H1 (cell line): ENCODE measurements at regions of chr1 and their contacts with region 1.

Region 1: GRCh38 chr1:112809253-112809684 is 94.1 kb upstream of the PPM1J start:
- DNase-seq: peak in 1 of 2 experiments; percentile 96
- H3K4me3 ChIP-seq: no peak overlapping the region
- H3K27ac ChIP-seq: peak overlapping the region; percentile 4; the same call in 1 of the 2 replicates
- H3K4me1 ChIP-seq: peaks cover 5 to 13% (median 8%) of the 10 kb centered on the region in 4 experiments; a peak in 6 of 7 replicates
- H3K27me3 ChIP-seq: no peaks in the 10 kb centered on the region
- CTCF ChIP-seq: peak; percentile 87 to 96 (median 96)
- EP300 ChIP-seq: no peak
- POLR2A ChIP-seq: no peak
- RAD21 ChIP-seq: peak; percentile 93 to 96

Region 2: DNA sequence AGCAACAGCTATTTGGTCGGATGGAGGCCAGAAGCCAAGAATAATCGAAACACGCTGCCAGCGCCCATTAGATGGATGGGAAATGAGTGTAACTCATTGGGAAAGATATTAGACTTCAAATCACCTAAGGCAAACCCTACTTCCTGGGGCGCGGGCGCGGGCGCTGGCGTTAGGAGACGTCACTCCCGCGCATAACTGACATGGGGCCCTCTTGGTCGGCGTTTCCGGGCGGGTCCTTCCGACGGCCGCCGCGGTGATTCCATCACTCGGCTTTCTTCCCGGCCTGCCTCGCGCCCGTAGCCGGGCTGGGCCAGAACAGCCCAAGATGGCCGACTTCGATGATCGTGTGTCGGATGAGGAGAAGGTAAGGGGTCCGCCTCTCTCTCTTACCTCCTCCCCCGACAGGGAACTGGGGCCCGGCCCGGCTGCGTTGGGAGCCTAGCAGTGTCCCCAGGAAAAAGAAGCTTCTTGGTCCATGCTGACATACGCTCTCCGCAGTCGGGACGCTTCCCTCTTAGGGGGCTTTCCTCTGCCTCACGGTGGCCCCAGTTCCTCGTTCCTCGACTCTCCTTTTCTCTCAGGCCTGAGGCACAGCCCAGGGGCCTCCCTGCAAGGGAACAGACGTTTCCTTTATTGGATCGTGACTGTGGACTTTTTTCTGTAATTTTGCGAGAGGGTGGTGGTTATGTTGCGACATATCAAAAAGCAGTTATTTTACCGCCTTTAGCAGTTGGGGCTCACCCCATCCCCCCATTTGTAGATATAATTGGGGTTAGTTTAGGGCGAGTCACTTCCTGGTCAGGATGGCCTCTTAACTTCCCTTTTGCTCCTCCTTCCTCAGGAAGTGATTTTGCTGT is 189.5 kb before region 1 on chr1 and contains the start of gene CAPZA1:
- CTCF ChIA-PET with region 1: no interaction called
- POLR2A ChIA-PET with region 1: no interaction called
- DNase-seq: peak; percentile 61 to 87
- H3K4me3 ChIP-seq: peak within 1 kb of the TSS; percentile 84 to 98 (median 96)
- H3K27ac ChIP-seq: peak within 1 kb of the TSS; percentile 96
- H3K4me1 ChIP-seq: peaks cover 0 to 5% (median 0%) of the 10 kb centered on the region in 4 experiments; a peak in 2 of 7 replicates
- H3K27me3 ChIP-seq: no peaks in the 10 kb centered on the region
- CTCF ChIP-seq: no peak
- EP300 ChIP-seq: peak in 1 of 2 experiments; percentile 71; a peak in 1 of 3 replicates
- POLR2A ChIP-seq: peak; percentile 87 to 96
- RAD21 ChIP-seq: no peak; a peak in 1 of 4 replicates
- total RNA-seq, gene CAPZA1: 107 and 114 TPM in 2 replicates

Region 3: GRCh38 chr1:112794654-112795239 is 14.5 kb before region 1 on chr1:
- CTCF ChIA-PET with region 1: interaction called, 21 read pairs
- POLR2A ChIA-PET with region 1: interaction called, 3 read pairs
- DNase-seq: no peak
- H3K4me3 ChIP-seq: no peak overlapping the region
- H3K27ac ChIP-seq: 0 out of 2 replicates have a peak overlapping the region, but pooled peaks have one; percentile 52
- H3K4me1 ChIP-seq: peaks cover 2 to 25% (median 14%) of the 10 kb centered on the region in 4 experiments
- H3K27me3 ChIP-seq: no peaks in the 10 kb centered on the region; a peak in 1 of 7 replicates
- CTCF ChIP-seq: no peak
- EP300 ChIP-seq: no peak
- POLR2A ChIP-seq: no peak
- RAD21 ChIP-seq: no peak

Region 4: DNA sequence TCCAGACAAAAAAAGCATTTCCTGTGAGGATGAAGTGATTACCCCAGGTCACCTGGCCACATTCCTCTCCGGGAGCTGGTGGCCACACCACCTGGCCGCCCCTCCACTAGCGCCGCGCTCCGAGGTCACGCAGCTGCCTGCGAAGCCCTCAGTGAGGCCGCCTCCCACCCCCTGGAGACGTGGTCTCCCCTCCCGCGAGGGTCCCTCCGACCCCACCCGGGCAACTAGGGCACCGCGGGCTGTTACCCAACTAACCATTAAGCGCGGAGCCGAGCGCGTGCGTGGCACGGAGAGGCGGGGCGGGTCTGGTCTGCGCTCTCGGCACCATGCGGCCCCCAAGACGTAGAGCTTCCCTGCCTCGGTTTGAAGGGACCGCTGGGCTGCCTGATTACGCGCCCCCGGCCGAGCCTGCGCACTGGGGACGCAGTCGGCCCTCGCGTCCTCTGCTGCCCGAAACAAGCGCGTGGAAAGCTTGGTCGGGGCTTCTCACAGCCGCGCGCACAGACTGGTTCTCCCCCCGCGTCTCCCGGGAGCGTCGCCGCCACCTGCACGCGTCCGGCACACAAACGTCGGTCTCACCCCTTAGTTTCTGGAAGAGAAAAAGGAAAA is 40.3 kb after region 1 on chr1:
- CTCF ChIA-PET with region 1: interaction called, 10 read pairs
- POLR2A ChIA-PET with region 1: interaction called, 5 read pairs
- DNase-seq: peak in 1 of 2 experiments; percentile 81
- H3K4me3 ChIP-seq: peak overlapping the region; percentile 14 to 51 (median 20); a peak in 7 of 8 replicates
- H3K27ac ChIP-seq: no peak overlapping the region
- H3K4me1 ChIP-seq: peaks cover 0 to 20% (median 6%) of the 10 kb centered on the region in 4 experiments; a peak in 6 of 7 replicates
- H3K27me3 ChIP-seq: peaks cover 0 to 2% (median 0%) of the 10 kb centered on the region in 4 experiments; a peak in 1 of 7 replicates
- CTCF ChIP-seq: no peak
- EP300 ChIP-seq: no peak
- POLR2A ChIP-seq: no peak; a peak in 1 of 3 replicates
- RAD21 ChIP-seq: no peak

Region 5: GRCh38 chr1:112872551-112872962 is 63.3 kb after region 1 on chr1:
- CTCF ChIA-PET with region 1: interaction called, 20 read pairs
- POLR2A ChIA-PET with region 1: no interaction called
- DNase-seq: no peak
- H3K4me3 ChIP-seq: no peak overlapping the region
- H3K27ac ChIP-seq: no peak overlapping the region
- H3K4me1 ChIP-seq: peaks cover 0 to 6% (median 2%) of the 10 kb centered on the region in 4 experiments; a peak in 6 of 7 replicates
- H3K27me3 ChIP-seq: no peaks in the 10 kb centered on the region; a peak in 1 of 7 replicates
- CTCF ChIP-seq: no peak
- EP300 ChIP-seq: no peak
- POLR2A ChIP-seq: no peak
- RAD21 ChIP-seq: no peak